ENCODE measurements at regions of chr2 and their contacts with region 1.

Region 1: GRCh38 chr2:69716555-69717114 is 25.3 kb upstream of the ANXA4 start:
- DNase-seq: no peak
- H3K4me3 ChIP-seq: no peak overlapping the region
- H3K27me3 ChIP-seq: no peaks in the 10 kb centered on the region
- CTCF ChIP-seq: no peak

Region 2: DNA sequence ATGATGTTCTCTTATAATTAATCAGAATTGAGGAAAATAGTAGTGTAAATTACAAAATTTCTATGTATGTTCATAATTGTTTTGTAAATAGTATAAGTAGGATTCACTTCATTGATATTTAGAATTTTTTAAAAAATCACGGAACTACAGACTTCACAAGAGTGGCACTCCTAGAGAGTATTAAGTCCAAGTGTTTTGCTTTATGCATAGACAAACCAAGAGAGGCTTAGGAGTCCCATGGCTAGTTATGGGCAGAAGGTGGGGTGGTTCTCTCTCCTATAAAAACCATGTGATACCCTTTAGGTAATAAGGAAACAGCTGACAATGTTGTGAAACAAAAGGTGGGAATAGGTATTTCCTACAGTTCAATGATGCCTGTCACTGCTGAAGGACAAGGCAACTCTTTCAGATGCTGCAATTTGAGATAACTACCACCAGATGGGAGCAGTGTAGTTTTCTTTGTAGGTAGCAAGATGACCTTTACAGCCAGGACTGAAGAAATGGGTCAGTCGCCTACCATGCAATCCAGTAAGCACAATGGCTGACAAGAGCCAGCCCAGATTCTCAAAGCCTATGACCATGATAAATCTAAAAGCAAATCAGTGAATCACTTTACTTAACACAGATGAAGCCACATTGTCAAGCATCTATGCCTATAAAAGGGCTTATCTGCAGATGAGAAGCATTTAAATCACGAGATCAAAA is 157.0 kb before region 1 on chr2:
- CTCF ChIA-PET with region 1: interaction called, 14 read pairs
- POLR2A ChIA-PET with region 1: no interaction called
- DNase-seq: no peak
- H3K4me3 ChIP-seq: no peak overlapping the region
- H3K27me3 ChIP-seq: no peaks in the 10 kb centered on the region
- CTCF ChIP-seq: peak; percentile 59

Region 3: DNA sequence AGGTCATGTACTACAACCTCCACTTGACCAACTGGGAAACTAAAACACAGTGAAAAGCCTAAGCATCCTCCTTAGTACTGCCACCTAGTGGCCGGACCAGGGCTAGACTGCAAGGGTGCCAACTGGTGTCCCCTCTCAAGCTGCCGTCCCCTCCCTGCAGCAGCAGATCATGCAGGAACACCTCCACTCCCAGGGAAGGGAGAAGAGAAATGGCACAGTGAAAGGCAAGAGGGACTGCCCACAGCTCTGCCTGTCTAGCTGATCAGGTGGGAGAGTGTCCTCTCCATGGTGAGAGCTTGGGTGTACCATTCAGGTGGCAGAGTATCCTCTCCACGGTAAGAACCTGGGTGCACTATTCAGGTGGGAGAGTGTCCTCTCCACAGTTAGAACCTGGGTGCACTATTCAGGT is 151.2 kb before region 1 on chr2:
- CTCF ChIA-PET with region 1: interaction called, 14 read pairs
- POLR2A ChIA-PET with region 1: no interaction called
- DNase-seq: no peak
- H3K4me3 ChIP-seq: no peak overlapping the region
- H3K27me3 ChIP-seq: no peaks in the 10 kb centered on the region
- CTCF ChIP-seq: peak; percentile 57

Region 4: DNA sequence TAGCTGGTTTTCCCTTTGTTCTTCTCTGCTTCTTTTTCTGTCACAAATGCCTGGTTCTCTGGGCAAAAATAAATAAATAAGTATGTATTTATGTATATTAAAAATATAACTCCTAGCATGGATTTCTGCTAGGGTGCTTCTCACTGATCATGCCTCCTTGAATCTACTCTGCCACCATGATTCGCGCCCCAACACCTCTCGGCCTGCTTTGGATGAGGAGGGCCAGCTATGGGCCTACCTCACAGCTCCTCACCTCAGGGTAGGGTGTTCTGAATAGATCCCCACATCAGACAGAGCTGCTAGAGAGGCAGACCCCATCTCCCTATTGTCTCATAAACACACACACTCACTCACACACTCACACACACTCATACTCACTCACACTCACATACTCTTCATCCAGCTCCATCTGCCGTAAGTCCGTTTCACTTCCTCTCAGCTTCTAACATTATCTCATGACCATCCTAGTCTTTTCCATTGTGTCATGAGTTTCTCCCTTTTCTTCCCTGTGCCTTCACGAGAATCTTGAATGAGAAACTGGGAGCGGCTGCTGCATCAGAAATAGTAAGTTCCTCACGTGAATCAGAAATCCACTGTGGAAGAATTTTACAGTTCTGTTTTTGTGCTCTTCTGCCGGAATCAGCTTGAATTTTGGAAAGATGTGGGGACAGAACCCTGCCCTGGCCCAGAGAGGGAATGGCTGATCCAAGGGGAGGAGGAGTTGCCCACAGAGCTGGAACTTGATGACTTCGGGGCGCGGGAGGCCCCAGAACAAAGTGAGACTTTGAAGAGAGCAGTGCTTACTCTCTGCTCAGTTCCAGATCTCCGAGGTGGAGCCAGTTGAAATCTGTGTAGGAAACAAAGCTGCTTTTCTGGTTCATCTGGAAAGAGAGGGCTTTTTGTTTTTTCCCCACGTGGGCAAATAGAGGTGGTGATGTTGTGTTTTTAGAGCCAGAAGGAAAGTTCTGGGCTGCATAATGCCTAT is 46.2 kb after region 1 on chr2:
- CTCF ChIA-PET with region 1: no interaction called
- POLR2A ChIA-PET with region 1: no interaction called
- DNase-seq: no peak
- H3K4me3 ChIP-seq: no peak overlapping the region
- H3K27me3 ChIP-seq: no peaks in the 10 kb centered on the region
- CTCF ChIP-seq: no peak

Measured in BJ (cell line).